Motor neuron (in vitro differentiated cells): ENCODE measurements at regions of chr18 and their contacts with region 1.

Region 1: GRCh38 chr18:32714571-32715148 is 58.2 kb downstream of the KLHL14 start:
- ATAC-seq: peak; percentile 80 to 97 (median 86)
- H3K4me3 ChIP-seq: no peak overlapping the region
- H3K27ac ChIP-seq: no peak overlapping the region
- H3K4me1 ChIP-seq: no peaks in the 10 kb centered on the region

Region 2: DNA sequence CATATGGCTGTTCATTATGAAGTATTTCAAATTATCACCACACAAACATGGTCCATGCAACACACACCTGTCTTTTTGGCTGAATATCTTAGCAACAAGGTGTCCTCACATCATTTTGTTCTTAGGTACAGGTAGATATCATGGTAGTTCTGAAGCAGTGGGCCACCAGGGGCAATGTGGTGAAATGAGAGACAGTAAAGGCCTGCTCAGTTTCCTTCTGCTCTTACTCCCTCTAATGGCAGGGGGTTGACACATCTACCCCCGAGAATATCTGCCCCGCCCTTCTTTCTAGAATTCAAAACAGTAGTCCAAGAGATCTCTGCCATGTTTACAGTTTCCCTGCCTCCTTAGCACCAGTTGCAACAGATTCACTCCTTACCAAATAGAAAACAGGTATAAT is 205.1 kb after region 1 on chr18:
- in situ Hi-C with region 1: loop called in 1 of 9 experiments (anchors 25 kb)
- ATAC-seq: peak in 3 of 8 experiments; percentile 43 to 99 (median 46)
- H3K4me3 ChIP-seq: no peak overlapping the region
- H3K27ac ChIP-seq: no peak overlapping the region
- H3K4me1 ChIP-seq: peaks cover 6 to 28% of the 10 kb centered on the region in 2 donors